ENCODE measurements at regions of chr5 and their contacts with region 1.

Region 1: GRCh38 chr5:140372971-140373487 is 13.0 kb downstream of the SLC4A9 start:
- DNase-seq: no peak
- H3K4me3 ChIP-seq: no peak overlapping the region
- H3K27ac ChIP-seq: no peak overlapping the region
- H3K4me1 ChIP-seq: peaks cover 7 to 13% (median 9%) of the 10 kb centered on the region in 4 donors
- H3K27me3 ChIP-seq: no peaks in the 10 kb centered on the region
- CTCF ChIP-seq: peak; percentile 75 to 91 (median 80)
- EP300 ChIP-seq: no peak
- POLR2A ChIP-seq: no peak

Region 2: DNA sequence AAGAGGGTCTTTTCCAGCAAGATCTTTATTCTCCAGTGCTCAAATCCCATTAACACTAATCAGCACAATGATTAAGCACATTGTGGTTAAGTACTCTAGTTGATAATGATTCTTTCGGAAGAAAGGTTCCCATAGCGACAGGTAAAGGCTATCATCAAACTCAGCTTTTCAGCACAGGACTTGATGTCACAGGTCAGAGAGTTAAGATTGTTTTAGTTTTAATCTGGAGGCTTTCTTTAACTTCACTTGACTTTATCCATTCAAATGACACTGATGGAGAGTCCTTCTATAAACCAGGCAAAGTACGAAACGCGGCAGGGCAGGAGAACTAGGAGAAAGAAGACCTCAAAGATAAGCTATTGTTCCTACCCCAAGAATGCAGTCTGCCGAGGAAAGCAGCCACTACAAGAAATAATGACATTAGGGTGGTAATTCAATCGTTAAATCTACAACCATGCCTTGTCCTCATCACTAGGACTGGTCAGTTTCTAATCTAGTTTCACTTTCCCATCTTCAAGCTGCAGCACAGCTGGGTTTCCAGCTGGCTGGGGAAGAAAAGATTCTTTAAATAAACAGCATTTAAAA is 334.6 kb before region 1 on chr5:
- intact Hi-C with region 1: no loop called
- DNase-seq: no peak
- H3K4me3 ChIP-seq: peak overlapping the region; percentile 52 to 65 (median 57)
- H3K27ac ChIP-seq: peak overlapping the region; percentile 76 to 82 (median 80)
- H3K4me1 ChIP-seq: peaks cover 53 to 73% (median 66%) of the 10 kb centered on the region in 4 donors
- H3K27me3 ChIP-seq: no peaks in the 10 kb centered on the region
- CTCF ChIP-seq: no peak
- EP300 ChIP-seq: no peak
- POLR2A ChIP-seq: no peak

Region 3: GRCh38 chr5:140664359-140665119 is 291.5 kb after region 1 on chr5 and contains the start of gene WDR55:
- intact Hi-C with region 1: loop called (anchors 10 kb)
- DNase-seq: peak; percentile 97
- H3K4me3 ChIP-seq: peak within 1 kb of the TSS; percentile 69 to 86 (median 78)
- H3K27ac ChIP-seq: peak within 1 kb of the TSS; percentile 84 to 94 (median 92)
- H3K4me1 ChIP-seq: peaks cover 24 to 32% (median 29%) of the 10 kb centered on the region in 4 donors
- H3K27me3 ChIP-seq: no peaks in the 10 kb centered on the region
- CTCF ChIP-seq: no peak
- EP300 ChIP-seq: no peak
- POLR2A ChIP-seq: peak; percentile 48
- total RNA-seq, gene WDR55: 17.7 to 23.8 (median 20.6) TPM

Region 4: DNA sequence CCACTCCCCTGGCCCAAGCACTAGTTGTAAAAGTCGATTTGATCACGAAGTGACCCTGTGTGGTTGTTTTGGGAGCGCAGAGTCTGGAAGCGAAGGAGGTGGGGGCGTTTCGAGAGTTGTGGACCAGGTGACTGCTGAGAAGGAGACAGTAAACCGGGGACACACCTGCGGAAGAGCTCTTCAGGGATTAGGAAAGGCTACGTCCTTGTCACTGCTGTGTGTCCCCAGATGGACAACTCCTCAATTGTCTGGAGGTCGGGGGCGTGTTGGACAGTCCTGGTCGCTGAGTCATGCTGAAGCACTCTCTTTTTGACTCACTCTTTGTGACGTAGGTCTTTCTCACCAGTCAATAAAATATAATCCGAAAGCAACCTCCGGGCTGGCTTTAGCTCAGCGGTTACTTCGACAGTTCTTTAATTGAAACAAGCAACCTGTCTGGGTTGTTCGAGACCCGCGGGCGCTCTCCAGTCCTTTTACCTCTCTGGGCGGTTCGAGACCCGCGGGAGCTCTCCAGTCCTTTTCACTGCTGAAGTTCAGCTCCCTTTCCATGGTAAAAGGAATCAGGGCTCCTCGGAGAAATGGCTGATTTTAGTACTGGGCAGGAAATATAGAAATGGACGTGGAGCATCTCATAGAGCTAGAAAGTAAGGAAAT is 338.0 kb after region 1 on chr5:
- intact Hi-C with region 1: loop called (anchors 10 kb)
- DNase-seq: peak; percentile 99
- H3K4me3 ChIP-seq: peak overlapping the region; percentile 57 to 62 (median 62)
- H3K27ac ChIP-seq: peak overlapping the region; percentile 79 to 92 (median 83)
- H3K4me1 ChIP-seq: peaks cover 5 to 16% (median 6%) of the 10 kb centered on the region in 4 donors
- H3K27me3 ChIP-seq: no peaks in the 10 kb centered on the region
- CTCF ChIP-seq: no peak
- EP300 ChIP-seq: no peak
- POLR2A ChIP-seq: no peak

Measured in esophagus muscularis mucosa (tissue), 4 donors.